Aorta (tissue), 5 donors: ENCODE measurements at regions of chr5 and their contacts with region 1.

Region 1: DNA sequence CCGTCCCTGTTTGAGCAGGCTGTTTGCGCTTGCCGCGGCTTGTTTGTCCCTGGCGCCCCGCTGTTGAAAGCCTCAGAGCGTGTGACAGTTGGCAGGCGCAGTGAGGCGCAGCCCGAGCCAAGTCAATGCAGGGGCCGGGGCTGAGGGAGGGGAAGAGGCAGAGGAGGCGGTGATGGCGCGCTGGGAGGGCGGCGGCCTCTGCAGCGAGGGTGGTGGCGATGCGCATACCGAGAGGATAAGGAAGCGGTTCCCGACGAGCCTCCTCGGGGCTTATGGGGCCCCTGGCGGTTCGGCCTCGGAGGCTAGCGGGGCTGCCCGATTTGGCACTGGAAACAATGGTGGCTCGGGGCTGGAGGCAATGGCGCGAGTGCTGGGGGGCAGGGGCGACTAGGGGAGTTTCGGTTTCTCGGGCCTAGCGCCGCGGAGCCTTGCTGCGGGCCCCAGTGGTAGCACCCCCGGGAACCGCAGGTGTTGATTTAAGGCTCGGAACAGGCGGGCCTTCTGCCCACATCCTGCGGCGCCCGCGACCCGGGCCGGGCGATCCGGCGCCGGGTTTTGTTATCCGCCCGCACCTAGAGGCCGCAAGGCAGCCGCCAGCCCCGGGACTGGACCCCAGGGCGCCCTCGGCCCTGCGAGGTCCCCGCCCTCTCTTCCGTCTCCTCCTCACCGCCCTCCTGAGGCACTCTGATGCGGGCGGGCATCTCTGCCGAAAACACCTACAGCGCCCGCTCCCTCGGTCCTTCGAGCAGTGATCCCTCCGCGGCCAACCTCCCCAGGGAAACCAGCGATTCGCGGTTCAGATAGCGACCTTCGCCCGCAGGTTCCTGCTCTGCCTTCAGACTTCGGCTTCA is 947 bp upstream of the LNPEP start:
- DNase-seq: peak; percentile 93 to 96
- ATAC-seq: peak; percentile 95
- H3K4me3 ChIP-seq: peak overlapping the region; percentile 73 to 87
- H3K27ac ChIP-seq: peak overlapping the region; percentile 77 to 96
- H3K4me1 ChIP-seq: no peaks in the 10 kb centered on the region
- H3K27me3 ChIP-seq: no peaks in the 10 kb centered on the region

Region 2: DNA sequence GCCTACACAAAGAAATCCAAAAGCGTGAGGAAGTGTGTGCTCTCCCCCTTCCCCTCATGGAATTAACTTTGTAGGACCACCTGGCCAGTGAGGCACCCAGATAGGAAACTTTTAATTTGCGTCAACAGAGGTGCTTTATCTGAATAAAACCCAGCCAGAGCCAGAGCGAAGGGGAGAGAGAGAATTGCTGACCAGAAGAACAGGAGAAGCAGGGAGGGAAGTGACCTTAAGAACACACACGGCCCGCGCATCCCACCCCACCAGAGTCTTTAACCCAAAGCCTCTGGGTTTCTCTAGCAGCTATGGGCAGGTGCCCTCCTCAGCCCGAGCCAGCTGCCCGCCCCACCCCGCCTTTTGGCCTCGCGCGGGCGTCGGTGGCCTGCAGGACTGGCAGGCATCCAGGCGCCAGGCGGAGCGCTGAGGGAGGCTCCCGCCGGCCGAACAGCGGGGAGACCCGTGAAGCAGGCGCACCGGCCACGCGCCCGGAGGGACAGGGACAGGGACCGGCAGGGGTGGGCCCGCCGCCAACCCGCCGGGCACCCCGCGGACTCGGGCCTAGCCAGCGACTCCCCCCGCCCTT is 127.8 kb before region 1 on chr5:
- intact Hi-C with region 1: loop called in 1 of 2 experiments (anchors 10 kb)
- DNase-seq: peak; percentile 85 to 94
- ATAC-seq: peak; percentile 85
- H3K4me3 ChIP-seq: peak overlapping the region; percentile 67 to 86
- H3K27ac ChIP-seq: peak overlapping the region; percentile 89 to 98
- H3K4me1 ChIP-seq: no peaks in the 10 kb centered on the region
- H3K27me3 ChIP-seq: no peaks in the 10 kb centered on the region

Region 3: DNA sequence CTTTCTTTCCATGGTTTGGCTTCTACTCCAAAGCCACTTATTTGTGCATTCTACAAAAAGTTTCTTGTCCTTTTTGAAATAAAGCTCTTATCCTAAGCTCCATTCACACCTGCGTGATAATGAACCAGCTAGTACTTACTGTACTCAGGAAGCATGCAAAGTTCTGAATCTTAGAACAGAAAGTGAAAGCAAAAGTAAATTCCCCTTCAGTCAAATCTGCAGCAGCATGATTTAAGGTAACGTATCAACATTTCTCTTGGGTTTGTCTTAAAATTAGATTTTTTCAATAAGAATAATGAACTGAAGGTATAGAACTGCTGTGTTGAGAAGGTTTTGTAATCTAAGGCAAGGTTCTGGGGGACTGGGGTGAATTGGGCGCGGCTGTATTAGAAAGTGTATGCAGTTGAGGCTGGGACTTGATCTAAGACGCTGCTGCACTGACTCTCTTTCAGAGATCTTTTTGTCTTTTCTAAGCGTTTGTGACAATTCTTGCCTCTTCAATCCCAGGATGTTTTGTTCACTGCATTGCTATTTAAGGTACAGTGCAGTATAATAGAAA is 58.6 kb before region 1 on chr5 and contains the start of gene ERAP2:
- intact Hi-C with region 1: loop called in 1 of 2 experiments (anchors 5 kb)
- DNase-seq: no peak
- ATAC-seq: peak; percentile 65
- H3K4me3 ChIP-seq: peak within 1 kb of the TSS; percentile 96 to 99
- H3K27ac ChIP-seq: peak within 1 kb of the TSS in 1 of 2 donors; percentile 25
- H3K4me1 ChIP-seq: no peaks in the 10 kb centered on the region
- H3K27me3 ChIP-seq: no peaks in the 10 kb centered on the region
- total RNA-seq, gene ERAP2: 10.8 to 24.2 TPM

Region 4: GRCh38 chr5:96997265-96997859 is 62.4 kb after region 1 on chr5:
- intact Hi-C with region 1: loop called in 1 of 2 experiments (anchors 10 kb)
- DNase-seq: no peak
- ATAC-seq: no peak
- H3K4me3 ChIP-seq: no peak overlapping the region
- H3K27ac ChIP-seq: no peak overlapping the region
- H3K4me1 ChIP-seq: no peaks in the 10 kb centered on the region
- H3K27me3 ChIP-seq: no peaks in the 10 kb centered on the region

Region 5: DNA sequence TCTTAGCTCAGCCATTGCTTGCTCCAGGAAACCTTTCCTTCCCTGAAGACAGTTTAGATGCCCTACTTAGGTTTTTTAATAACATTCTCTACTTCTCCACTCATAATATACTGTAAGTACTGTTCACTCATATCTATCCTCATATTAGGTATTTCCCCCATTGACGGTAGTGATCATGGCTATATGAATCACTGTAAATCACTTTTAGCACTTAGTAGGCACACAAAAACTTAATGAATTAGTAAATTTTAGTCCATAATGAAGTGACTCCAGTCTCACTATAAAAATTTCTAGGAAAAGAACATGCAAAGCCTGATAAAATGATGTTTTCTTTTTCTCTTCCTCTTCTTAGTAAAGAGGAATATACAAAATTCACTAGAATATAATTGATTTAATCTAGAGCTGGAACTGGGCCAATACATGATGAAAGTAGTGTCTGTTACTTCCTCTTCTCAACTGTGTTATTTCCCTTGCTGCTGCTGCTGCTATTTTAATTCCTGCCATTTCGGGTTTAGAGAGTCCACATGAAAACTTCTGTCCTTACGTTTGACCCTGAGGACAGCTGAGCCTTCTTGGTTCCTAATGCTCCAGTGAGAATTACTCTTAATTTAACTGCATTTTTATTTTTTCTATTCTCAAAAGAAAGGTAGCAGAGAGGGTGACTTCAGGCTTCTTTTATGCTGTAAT is 74.4 kb after region 1 on chr5:
- intact Hi-C with region 1: no loop called
- DNase-seq: no peak
- ATAC-seq: no peak
- H3K4me3 ChIP-seq: no peak overlapping the region
- H3K27ac ChIP-seq: no peak overlapping the region
- H3K4me1 ChIP-seq: no peaks in the 10 kb centered on the region
- H3K27me3 ChIP-seq: no peaks in the 10 kb centered on the region